Mammary epithelial cell (primary cell): ENCODE measurements at regions of chr1 and their contacts with region 1.

Region 1: GRCh38 chr1:53869454-53870117 is 20.0 kb downstream of the YIPF1 start:
- DNase-seq: no peak
- H3K4me3 ChIP-seq: no peak overlapping the region
- H3K27ac ChIP-seq: no peak overlapping the region
- H3K4me1 ChIP-seq: no peaks in the 10 kb centered on the region
- H3K27me3 ChIP-seq: no peaks in the 10 kb centered on the region
- CTCF ChIP-seq: no peak

Region 2: GRCh38 chr1:53971718-53972117 is 102.1 kb after region 1 on chr1:
- CTCF ChIA-PET with region 1: no interaction called
- dilution Hi-C with region 1: loop called (anchors 5 kb)
- in situ Hi-C with region 1: no loop called
- intact Hi-C with region 1: no loop called
- DNase-seq: no peak
- H3K4me3 ChIP-seq: no peak overlapping the region
- H3K27ac ChIP-seq: no peak overlapping the region
- H3K4me1 ChIP-seq: no peaks in the 10 kb centered on the region
- H3K27me3 ChIP-seq: no peaks in the 10 kb centered on the region
- CTCF ChIP-seq: no peak